ENCODE measurements at regions of chr20 and their contacts with region 1.

Region 1: DNA sequence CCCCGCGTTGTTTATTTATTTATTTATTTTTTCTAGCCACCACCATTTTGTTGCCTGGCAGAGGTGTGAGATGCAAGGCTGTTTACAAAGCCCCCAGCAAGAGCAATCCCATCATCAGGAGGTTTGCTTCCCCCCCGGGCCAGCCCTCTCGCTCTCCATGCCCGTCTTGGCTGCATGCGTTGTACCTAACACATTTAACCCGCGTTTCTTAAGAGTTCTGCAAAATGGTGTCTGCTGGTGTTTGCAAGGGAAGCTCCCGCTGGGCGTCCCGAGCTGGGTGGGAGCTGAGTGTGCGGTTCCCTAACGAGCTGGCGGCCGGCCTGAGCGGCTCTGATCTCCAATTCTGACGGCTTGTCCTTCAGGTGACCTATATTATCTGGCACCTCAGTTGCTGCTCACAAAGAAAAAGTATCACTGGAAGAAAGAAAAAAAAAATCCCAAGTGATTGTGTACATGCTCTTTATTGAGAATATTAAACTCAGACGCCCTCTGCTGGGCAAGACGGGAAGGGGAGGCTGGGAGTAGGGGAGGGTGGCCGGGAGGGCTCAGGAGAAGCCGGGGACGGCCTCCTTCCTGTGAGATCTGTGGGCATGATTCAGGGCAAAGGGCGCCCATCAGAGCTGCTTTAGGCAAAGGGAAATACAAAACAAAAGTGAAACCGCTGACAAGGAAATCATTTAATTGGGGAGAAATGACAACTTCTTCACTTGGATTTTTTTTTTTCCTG is 154.8 kb downstream of the BCAS1 start:
- DNase-seq: peak; percentile 98
- ATAC-seq: peak; percentile 98
- H3K4me3 Mint-ChIP-seq: peak overlapping the region; percentile 94
- H3K27ac Mint-ChIP-seq: peak overlapping the region; percentile 92
- H3K4me1 Mint-ChIP-seq: peaks cover 40% of the 10 kb centered on the region
- H3K27me3 Mint-ChIP-seq: no peaks in the 10 kb centered on the region

Region 2: DNA sequence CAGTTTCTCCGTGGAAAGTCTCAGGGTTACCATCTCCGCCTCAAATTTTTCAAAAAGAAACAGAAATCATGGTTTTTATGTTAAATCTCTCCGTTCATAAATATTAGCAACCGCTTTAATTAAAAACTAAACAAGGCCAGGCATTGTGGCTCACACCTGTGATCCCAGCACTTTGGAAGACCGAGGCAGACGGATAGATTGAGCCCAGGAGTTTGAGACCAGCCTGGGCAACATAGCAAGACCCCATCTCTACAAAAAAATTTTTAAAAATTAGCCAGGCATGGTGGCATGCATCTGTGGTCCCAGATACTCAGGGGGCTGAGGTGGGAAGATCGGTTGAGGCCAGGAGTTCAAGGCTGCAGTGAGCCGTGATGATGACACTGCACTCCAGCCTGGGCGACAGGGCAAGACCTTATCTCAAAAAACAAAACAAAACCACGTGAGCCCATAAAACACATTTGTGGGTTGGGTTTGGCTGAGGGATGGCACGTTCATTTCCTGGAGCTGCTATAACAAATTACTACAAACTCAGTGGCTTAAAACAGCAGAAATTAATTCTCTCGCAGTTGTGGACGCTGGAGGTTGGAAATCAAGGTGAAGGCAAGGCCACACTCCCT is 545.2 kb before region 1 on chr20:
- CTCF ChIA-PET with region 1: no interaction called
- DNase-seq: no peak
- ATAC-seq: no peak
- H3K4me3 Mint-ChIP-seq: no peak overlapping the region
- H3K27ac Mint-ChIP-seq: no peak overlapping the region
- H3K4me1 Mint-ChIP-seq: no peaks in the 10 kb centered on the region
- H3K27me3 Mint-ChIP-seq: peaks cover 3% of the 10 kb centered on the region

Region 3: GRCh38 chr20:53578492-53579222 is 337.0 kb before region 1 on chr20:
- CTCF ChIA-PET with region 1: interaction called, 78 read pairs
- DNase-seq: peak; percentile 72
- ATAC-seq: peak; percentile 34
- H3K4me3 Mint-ChIP-seq: peak overlapping the region; percentile 89
- H3K27ac Mint-ChIP-seq: peak overlapping the region; percentile 88
- H3K4me1 Mint-ChIP-seq: peaks cover 78% of the 10 kb centered on the region
- H3K27me3 Mint-ChIP-seq: no peaks in the 10 kb centered on the region

Region 4: GRCh38 chr20:53708129-53708968 is 207.3 kb before region 1 on chr20:
- CTCF ChIA-PET with region 1: interaction called, 19 read pairs
- DNase-seq: peak; percentile 65
- ATAC-seq: peak; percentile 59
- H3K4me3 Mint-ChIP-seq: peak overlapping the region; percentile 59
- H3K27ac Mint-ChIP-seq: peak overlapping the region; percentile 99
- H3K4me1 Mint-ChIP-seq: peaks cover 51% of the 10 kb centered on the region
- H3K27me3 Mint-ChIP-seq: no peaks in the 10 kb centered on the region

Region 5: DNA sequence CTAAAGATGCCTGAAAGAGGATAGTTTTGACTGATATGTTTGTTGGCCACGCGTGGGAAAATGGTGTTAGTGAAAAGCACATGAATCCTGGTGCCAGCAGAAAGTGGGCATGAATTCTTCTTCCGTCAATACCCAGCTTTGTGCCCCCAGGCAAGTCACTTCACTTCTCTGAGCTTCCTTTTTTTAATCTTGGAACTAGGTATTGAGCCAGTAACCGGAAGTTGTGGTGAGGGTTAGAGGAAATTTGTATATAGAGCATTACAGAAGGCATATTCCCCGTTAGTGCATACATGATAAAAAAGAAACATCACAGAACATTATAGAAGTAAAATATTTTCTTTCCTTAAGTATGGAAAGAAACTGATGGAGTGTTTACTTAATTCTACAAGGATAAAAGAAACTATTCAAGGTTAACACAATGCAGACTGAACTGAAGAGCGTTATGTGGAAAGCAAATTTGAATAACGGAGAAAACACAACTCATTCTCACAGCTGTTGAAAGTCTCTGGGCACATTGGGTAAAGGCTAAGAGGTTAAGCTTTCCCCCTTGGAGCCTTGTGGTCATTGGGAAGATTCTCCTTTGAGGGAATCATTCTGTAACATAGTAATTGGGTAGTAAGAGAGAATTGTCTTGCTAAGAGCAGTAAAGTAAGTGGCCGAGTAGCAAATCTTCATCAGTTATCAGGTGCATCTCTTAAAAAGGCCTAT is 68.3 kb before region 1 on chr20:
- CTCF ChIA-PET with region 1: interaction called, 17 read pairs
- DNase-seq: no peak
- ATAC-seq: no peak
- H3K4me3 Mint-ChIP-seq: peak overlapping the region; percentile 56
- H3K27ac Mint-ChIP-seq: peak overlapping the region; percentile 70
- H3K4me1 Mint-ChIP-seq: peaks cover 57% of the 10 kb centered on the region
- H3K27me3 Mint-ChIP-seq: no peaks in the 10 kb centered on the region

Region 6: GRCh38 chr20:53884859-53885541 is 30.6 kb before region 1 on chr20:
- CTCF ChIA-PET with region 1: interaction called, 10 read pairs
- DNase-seq: peak; percentile 70
- ATAC-seq: peak; percentile 90
- H3K4me3 Mint-ChIP-seq: peak overlapping the region; percentile 75
- H3K27ac Mint-ChIP-seq: peak overlapping the region; percentile 95
- H3K4me1 Mint-ChIP-seq: peaks cover 50% of the 10 kb centered on the region
- H3K27me3 Mint-ChIP-seq: no peaks in the 10 kb centered on the region

Region 7: GRCh38 chr20:53899351-53900167 is 16.1 kb before region 1 on chr20:
- CTCF ChIA-PET with region 1: interaction called, 58 read pairs
- DNase-seq: peak; percentile 93
- ATAC-seq: peak; percentile 91
- H3K4me3 Mint-ChIP-seq: no peak overlapping the region
- H3K27ac Mint-ChIP-seq: peak overlapping the region; percentile 83
- H3K4me1 Mint-ChIP-seq: peaks cover 61% of the 10 kb centered on the region
- H3K27me3 Mint-ChIP-seq: no peaks in the 10 kb centered on the region

Region 8: DNA sequence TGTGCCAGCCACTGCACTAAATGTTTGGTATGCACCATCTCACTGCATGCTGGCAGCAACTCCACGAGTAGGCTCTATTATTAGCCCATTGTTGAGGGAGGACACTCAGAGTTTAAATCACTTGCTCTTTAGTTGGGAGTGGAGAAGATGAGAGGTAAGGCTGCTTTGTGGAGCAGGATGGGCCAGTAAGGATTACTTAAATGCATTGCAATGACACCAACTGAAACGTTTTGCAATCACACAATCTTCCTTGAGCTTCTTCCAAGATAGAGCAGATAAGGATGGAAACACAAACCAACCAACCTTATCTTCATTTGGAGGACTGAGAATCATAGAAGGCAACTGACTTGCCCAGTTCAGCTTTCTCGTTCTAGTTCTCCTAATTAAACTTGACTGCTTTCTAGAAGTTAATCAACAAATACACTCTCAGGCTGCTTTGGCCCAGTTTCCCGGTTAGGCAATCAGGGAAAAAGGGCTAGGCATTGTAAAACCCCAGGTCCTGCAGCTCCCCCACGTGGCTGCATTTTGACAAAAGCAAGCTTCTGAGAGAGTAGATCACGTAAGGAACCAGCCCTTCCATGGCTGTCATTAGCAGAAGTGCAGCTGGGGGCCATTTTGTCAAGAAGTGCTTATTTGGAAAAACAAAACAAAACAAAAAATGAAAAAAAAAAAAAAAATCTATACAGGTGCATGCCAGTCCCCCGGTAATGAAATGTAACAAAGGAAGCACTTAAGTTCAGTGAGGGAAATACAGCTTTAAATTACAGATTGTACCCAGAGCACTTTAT is 24.2 kb after region 1 on chr20:
- CTCF ChIA-PET with region 1: interaction called, 36 read pairs
- DNase-seq: peak; percentile 89
- ATAC-seq: peak; percentile 84
- H3K4me3 Mint-ChIP-seq: no peak overlapping the region
- H3K27ac Mint-ChIP-seq: peak overlapping the region; percentile 21
- H3K4me1 Mint-ChIP-seq: peaks cover 46% of the 10 kb centered on the region
- H3K27me3 Mint-ChIP-seq: no peaks in the 10 kb centered on the region

Region 9: GRCh38 chr20:53984356-53985149 is 68.9 kb after region 1 on chr20:
- CTCF ChIA-PET with region 1: no interaction called
- DNase-seq: no peak
- ATAC-seq: no peak
- H3K4me3 Mint-ChIP-seq: no peak overlapping the region
- H3K27ac Mint-ChIP-seq: no peak overlapping the region
- H3K4me1 Mint-ChIP-seq: peaks cover 16% of the 10 kb centered on the region
- H3K27me3 Mint-ChIP-seq: peaks cover 24% of the 10 kb centered on the region

Region 10: GRCh38 chr20:54025251-54025771 is 109.7 kb after region 1 on chr20:
- CTCF ChIA-PET with region 1: no interaction called
- DNase-seq: no peak
- ATAC-seq: no peak
- H3K4me3 Mint-ChIP-seq: no peak overlapping the region
- H3K27ac Mint-ChIP-seq: no peak overlapping the region
- H3K4me1 Mint-ChIP-seq: no peaks in the 10 kb centered on the region
- H3K27me3 Mint-ChIP-seq: peaks cover 10% of the 10 kb centered on the region